ENCODE measurements at regions of chr10 and their contacts with region 1.

Region 1: DNA sequence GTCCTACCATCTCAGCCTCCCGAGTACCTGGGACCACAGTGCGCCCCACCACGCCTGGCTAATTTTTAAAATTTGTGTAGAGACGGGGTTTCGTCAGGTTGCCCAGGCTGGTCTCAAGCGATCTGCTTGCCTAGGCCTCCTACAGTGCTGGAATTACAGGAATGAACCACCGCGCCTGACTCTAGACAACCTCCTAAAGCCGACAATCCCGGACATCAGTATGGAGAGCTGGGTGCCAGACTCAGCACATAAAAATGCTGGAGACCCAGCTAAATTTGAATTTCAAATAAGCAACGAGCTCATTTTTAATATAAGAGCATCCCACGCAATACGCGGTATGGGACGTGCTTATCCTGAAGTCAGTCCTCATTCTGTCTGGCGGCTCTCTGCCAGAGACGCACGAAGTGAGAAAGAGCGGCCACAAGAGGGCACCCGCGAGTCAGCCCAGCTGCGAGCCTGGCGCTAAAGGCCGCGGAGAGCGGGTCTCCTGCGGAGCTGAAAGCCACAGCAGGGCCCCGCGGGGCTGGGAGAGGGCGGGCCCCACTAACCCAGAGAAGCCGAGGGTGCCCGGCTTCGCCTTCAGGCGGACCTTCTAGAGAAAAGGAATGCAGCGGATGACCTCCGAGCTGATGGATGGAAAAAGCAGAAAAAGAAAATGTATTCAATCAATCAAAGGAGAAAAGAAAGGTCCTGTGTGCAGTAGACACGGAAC is 7.0 kb downstream of the CALY start:
- DNase-seq: peak; percentile 87
- CTCF ChIP-seq: peak; percentile 95

Region 2: DNA sequence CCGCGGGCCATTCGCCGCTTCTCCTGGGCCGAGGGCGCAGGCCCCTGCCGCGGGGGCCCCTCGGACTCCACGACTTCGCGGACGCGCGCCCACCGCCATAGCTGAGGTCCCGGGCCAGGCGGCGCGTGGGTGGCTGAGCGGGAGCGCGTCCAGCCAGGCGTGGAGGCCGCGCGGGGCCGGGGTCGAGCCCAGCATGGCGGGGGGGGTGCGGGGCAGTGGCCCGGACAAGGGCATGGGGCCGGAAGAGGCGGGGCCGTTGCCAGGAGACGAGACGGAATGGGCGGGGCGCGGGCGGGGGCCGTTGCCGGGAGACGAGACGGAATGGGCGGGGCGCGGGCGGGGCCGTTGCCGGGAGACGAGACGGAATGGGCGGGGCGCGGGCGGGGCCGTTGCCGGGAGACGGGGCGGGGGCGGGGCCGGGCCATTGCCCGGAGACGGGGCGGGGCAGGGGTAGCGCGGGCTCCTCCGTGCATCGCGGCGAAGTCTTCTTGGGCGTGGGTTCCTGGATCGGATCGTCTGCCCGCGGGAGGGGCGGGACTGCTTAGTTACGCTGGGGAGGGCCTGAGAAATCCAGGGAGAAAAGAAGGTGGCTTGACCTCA is 67.8 kb before region 1 on chr10:
- CTCF ChIA-PET with region 1: interaction called, 11 read pairs
- POLR2A ChIA-PET with region 1: no interaction called
- DNase-seq: peak; percentile 95
- CTCF ChIP-seq: no peak

Region 3: DNA sequence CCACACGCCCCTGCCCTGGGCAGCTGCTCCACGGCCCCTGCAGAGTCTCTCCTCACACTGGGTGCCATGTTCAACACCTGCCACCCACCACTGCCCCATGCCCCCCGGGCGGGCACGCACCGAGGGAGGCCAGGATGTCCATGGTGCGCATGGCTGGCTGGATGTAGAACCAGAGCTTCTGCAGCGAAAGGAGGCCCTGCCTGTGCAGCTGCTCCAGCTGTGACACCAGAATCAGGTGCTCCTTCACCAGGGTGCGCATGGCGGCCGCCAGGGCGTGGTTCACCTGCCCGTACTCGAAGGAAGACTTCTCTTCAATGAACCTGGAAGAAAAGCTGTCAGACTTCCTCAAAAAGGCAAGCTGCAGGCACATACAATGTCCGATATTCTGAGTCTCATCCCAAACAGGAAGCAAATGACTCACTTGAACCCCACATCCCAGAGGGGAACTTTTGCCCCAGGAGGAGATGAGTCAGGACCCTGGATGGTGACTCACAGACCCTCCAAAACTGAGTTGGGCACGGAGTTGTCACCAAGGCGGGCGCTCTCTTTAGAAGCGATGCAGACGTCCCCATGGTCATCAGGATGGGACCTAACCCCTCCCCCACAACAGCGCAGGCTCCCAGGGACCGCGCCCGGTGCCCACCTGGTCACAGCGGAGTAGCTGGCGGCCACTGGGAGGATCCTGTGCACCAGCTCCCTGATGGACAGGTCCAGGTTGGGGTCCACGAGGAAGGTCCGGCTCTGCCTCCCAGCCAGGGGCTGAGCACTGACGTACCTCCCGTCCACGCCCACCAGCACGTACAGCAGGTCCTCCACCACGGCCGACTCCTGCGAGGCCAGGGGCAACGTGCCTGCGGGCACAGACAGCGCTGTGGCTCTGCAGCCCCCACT is 36.5 kb before region 1 on chr10:
- CTCF ChIA-PET with region 1: no interaction called
- POLR2A ChIA-PET with region 1: no interaction called
- DNase-seq: no peak
- CTCF ChIP-seq: no peak

Region 4: DNA sequence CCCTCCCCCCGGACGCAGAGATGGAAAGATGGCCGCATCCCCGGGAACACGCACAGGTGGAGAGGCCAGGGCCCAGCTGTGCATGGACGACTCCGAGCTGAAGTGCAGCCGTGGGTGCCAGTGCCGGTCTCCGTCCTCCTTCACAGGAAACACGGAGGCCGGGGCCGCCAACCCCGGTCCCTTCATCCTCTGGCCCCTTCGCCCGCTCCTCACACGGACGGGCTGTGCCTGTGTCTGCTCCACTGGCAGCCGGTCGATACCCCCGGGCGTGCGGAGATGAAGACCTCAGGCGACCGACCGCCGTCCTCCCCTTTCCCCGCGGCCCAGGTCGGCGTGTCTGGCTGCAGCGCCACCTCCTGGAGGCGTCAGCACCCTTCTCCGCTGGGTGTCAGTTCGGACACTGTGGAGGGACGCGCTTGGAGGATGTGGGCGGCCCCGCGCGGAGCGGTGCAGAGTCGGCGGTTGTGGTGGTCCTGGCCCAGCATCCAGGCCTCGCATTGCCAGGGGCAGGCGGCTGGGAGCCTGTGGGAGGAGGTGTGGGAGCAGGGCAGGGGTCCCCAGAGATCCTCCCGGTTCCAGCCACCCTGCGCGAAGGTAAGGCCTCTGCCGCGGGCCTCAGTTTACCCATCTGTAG is 11.0 kb before region 1 on chr10:
- CTCF ChIA-PET with region 1: interaction called, 44 read pairs
- POLR2A ChIA-PET with region 1: no interaction called
- DNase-seq: peak; percentile 74
- CTCF ChIP-seq: peak; percentile 80

Region 5: DNA sequence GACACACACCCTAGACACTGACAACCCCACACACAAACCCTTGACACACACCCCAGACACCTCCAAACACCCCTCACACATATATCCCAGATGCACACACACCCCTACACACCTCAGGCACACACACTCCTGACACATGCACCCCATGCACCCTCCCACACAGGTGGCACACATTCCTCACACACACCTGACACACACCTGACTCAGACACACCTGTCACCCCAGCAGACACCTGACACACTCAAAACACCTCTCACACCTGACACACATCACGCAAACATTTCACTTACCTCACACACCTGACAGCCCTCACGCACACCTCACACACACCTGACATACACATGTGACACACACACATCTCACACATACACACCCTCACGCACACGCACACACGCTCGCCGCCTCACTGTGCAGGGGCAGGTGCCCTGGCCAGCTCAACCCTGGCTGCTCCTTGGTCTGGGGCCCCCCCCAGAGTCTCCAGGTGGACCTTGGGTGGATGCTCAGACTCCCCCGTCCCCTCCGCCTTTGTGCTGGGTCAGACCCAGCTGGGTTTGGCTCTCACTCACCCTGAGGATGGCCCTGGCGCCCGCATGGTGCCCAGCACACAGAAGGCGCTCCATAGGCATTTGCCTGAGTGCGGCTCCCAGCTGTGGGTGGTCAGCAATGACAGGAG is 10.2 kb after region 1 on chr10:
- CTCF ChIA-PET with region 1: interaction called, 14 read pairs
- POLR2A ChIA-PET with region 1: no interaction called
- DNase-seq: no peak
- CTCF ChIP-seq: no peak

Region 6: GRCh38 chr10:133351408-133352318 is 22.0 kb after region 1 on chr10:
- CTCF ChIA-PET with region 1: interaction called, 23 read pairs
- POLR2A ChIA-PET with region 1: no interaction called
- DNase-seq: no peak
- CTCF ChIP-seq: no peak

Region 7: DNA sequence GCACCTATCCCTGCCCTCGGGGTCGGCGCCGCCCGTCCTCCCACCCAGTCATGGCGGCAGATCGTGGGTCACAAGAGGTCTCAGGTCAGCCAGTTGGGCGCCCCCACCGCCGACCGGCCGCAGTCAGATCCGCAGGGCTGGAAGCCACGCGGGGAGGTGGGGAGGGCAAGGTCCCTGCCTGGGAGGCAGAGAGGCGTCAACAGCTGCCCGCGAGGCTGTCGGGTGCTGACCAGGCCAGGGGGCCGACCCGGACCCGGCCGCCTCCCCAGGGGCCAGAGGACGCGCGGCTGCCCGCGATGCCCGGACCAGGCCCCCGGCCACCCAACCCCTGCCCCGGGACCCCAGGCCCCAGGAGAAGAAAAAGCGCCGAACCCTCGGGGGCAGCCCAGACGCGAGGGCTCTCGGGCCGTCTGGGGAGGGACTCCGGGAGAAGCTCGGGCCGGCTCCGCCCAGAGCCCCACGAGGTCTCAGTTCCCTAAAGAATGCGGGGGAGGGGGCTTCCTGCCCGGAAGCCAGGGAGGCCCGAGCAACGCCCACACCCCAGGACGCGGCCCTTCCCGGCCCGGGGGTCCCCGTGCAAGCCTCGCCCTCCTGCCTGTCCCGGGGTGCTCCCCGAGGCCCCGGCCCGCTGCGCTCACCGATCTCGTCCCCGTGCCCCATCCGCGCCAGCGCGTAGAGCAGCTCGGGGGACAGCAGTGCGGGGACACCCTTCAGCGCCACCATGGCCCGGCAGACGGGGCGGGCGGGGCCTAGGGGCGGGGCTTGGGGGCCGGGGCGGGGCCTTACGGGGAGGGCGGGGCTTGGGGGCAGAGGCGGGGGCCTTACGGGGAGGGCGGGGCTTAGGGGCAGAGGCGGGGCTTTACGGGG is 27.9 kb after region 1 on chr10 and contains the start of gene FUOM:
- CTCF ChIA-PET with region 1: interaction called, 23 read pairs
- POLR2A ChIA-PET with region 1: no interaction called
- DNase-seq: peak; percentile 96
- CTCF ChIP-seq: no peak

Region 8: DNA sequence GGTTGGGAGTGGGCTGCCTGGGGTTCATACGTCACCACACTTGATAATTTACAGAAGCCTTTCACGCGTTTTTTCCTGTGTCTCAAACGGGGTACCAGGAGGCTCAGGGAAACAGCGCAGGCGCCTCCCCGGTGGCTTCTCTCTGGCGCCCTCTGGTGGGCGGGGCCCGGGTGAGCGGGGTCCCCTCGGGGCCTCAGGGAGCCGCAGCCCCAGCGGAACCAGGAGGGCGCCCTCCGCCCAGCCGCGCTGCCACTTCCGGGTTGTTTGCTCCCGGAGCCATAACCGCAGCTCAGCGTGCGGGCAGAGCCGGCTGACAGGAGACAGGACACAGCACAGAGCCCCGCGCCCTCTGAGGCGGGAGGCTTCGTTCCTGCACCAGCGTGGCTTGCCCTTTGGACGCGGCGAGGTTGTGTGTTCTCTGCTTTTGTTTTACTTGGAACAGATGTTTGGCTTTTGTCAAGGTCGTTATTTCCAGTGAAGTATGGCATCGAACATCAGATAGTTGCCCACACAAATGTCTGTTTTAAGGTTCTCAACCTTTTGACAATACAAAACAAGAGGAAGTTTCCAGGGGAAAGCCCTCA is 190.6 kb after region 1 on chr10:
- CTCF ChIA-PET with region 1: interaction called, 12 read pairs
- POLR2A ChIA-PET with region 1: no interaction called
- DNase-seq: peak; percentile 90
- CTCF ChIP-seq: peak; percentile 77

Measured in GM10248 (cell line).